SK-N-SH (cell line): ENCODE measurements at regions of chr19 and their contacts with region 1.

Region 1: GRCh38 chr19:33998739-33999345 is 173.5 kb upstream of the LSM14A start:
- DNase-seq: peak; percentile 33
- H3K4me3 ChIP-seq: no peak overlapping the region
- H3K27ac ChIP-seq: no peak overlapping the region
- H3K4me1 ChIP-seq: no peaks in the 10 kb centered on the region; a peak in 1 of 4 replicates
- H3K27me3 ChIP-seq: no peaks in the 10 kb centered on the region
- CTCF ChIP-seq: peak; percentile 63
- EP300 ChIP-seq: no peak
- RAD21 ChIP-seq: peak; percentile 49

Region 2: GRCh38 chr19:33785795-33786194 is 213.0 kb before region 1 on chr19:
- CTCF ChIA-PET with region 1: interaction called, 10 read pairs
- POLR2A ChIA-PET with region 1: no interaction called
- DNase-seq: no peak
- H3K4me3 ChIP-seq: no peak overlapping the region
- H3K27ac ChIP-seq: no peak overlapping the region
- H3K4me1 ChIP-seq: no peaks in the 10 kb centered on the region
- H3K27me3 ChIP-seq: no peaks in the 10 kb centered on the region
- CTCF ChIP-seq: no peak
- EP300 ChIP-seq: no peak
- RAD21 ChIP-seq: no peak

Region 3: DNA sequence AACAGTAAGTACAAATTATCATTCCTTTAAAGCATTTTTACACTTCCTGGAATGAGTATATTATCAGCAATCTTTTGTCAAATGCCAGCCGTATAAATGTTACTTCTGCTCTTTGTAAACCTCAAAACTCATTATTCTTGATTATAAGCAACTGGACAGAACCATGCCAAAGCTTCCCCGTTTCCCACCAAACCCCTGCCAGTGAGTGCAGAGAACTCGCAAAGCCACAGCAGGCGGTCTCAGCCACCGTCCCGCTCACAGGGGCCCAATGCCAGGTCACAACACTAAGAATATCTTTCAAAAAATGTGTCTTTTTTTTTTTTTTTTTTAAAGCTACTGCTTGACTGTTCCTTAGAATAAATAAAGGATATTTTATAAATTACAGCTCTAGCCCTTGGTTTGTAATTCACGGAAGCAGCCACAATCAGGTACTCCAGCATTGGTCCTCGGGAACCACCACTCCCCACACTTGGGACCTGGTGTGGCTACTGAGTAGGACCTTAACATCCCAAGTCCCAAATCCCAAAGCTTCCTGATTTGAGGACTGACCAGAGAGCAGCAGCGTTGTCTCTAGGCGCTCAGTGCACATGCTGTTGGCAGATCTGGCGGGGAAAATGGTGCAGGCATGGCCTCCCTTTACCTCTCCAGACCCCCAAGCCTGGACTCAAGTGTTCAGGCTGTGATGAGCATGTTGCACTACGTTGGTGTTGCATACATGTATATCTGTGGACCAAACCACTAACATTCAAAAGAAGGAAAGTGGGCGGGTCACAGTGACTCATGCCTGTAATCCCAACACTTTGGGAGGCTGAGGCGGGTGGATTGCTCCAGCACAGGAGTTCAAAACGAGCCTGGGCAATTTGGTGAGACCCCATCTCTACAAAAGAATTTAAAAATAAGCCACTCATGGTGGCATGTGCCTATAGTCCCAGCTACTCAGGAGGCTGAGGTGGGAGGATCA is 183.2 kb before region 1 on chr19:
- CTCF ChIA-PET with region 1: interaction called, 18 read pairs
- POLR2A ChIA-PET with region 1: no interaction called
- DNase-seq: peak; percentile 55
- H3K4me3 ChIP-seq: no peak overlapping the region
- H3K27ac ChIP-seq: peak overlapping the region in 1 of 2 experiments; percentile 92; a peak in 2 of 4 replicates
- H3K4me1 ChIP-seq: peaks cover 0 to 42% of the 10 kb centered on the region in 2 experiments; a peak in 2 of 4 replicates
- H3K27me3 ChIP-seq: no peaks in the 10 kb centered on the region
- CTCF ChIP-seq: no peak
- EP300 ChIP-seq: peak in 1 of 2 experiments; percentile 34; a peak in 1 of 4 replicates
- RAD21 ChIP-seq: no peak

Region 4: DNA sequence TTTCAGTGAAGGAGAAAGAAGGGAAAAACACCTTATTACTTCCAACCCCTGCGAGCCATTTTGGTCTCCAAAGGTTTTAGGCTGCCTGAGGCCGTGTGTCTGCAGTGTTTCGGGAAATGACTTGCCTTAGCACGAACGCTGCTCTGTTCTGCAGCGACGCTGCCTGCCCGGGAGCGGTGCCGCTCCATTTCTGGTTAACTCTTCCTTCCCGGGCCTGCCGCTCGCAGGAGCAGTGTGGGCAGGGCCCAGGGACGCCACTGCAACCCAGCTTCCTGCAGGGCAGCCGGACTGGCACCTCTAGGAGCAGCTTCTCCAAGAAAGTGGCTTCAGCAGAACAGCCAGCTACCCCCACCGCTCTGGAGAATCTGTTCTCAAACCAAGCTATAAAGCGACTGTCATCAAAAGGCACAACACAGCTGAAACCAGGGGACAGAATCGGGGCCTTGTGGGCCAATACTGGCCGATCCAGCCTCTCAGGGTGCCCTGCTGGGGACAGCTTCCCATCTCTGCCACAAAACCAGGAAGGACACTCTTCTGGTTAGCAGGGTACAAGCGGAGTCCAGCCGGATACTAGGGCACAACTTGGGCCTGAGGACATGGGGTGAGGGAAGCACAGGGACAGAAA is 129.9 kb before region 1 on chr19:
- CTCF ChIA-PET with region 1: interaction called, 12 read pairs
- POLR2A ChIA-PET with region 1: interaction called, 3 read pairs
- DNase-seq: peak; percentile 73
- H3K4me3 ChIP-seq: no peak overlapping the region
- H3K27ac ChIP-seq: peak overlapping the region in 1 of 2 experiments; percentile 98; a peak in 2 of 4 replicates
- H3K4me1 ChIP-seq: peaks cover 0 to 30% of the 10 kb centered on the region in 2 experiments; a peak in 2 of 4 replicates
- H3K27me3 ChIP-seq: no peaks in the 10 kb centered on the region
- CTCF ChIP-seq: no peak
- EP300 ChIP-seq: peak in 1 of 2 experiments; percentile 57; a peak in 2 of 4 replicates
- RAD21 ChIP-seq: peak; percentile 45; the same call in 1 of the 2 replicates

Region 5: DNA sequence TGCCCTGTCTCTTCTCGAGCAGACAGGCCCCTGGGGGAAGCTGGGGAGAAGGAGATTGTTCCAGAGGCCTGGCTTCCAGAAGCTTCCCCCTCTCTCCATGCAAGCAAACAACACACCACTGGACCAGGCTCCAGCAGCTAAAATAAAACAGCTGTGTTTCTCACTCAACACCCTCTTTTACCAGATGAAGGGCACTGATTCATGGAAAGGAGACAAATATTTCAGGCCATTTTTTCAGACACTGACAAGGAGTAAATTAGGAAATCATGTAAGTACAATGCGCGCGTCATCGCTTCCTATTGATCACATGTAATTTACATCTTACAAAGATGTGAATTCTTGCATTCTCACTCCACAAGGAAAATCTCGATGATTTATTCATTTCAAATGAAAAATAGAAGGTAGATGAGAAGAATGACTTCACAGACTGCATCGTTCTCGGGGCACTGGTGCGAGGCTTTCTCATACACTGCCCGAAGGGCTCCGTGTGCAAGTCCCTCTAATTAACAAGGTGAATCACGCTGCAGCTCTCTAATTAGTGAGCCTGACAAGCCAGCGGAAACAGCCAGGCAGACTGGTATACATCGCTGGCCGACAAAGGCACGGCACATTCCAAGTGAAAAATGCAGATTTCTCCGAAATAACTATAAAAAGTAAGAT is 48.6 kb before region 1 on chr19:
- CTCF ChIA-PET with region 1: interaction called, 13 read pairs
- POLR2A ChIA-PET with region 1: no interaction called
- DNase-seq: peak; percentile 48
- H3K4me3 ChIP-seq: no peak overlapping the region
- H3K27ac ChIP-seq: peak overlapping the region in 1 of 2 experiments; percentile 24; a peak in 1 of 4 replicates
- H3K4me1 ChIP-seq: peaks cover 0 to 5% of the 10 kb centered on the region in 2 experiments; a peak in 1 of 4 replicates
- H3K27me3 ChIP-seq: no peaks in the 10 kb centered on the region
- CTCF ChIP-seq: no peak
- EP300 ChIP-seq: peak in 1 of 2 experiments; percentile 35; a peak in 1 of 4 replicates
- RAD21 ChIP-seq: 0 out of 2 replicates have a peak, but pooled peaks have one; percentile 3

Region 6: GRCh38 chr19:33982706-33983105 is 16.1 kb before region 1 on chr19:
- CTCF ChIA-PET with region 1: interaction called, 24 read pairs
- POLR2A ChIA-PET with region 1: no interaction called
- DNase-seq: no peak
- H3K4me3 ChIP-seq: no peak overlapping the region
- H3K27ac ChIP-seq: no peak overlapping the region
- H3K4me1 ChIP-seq: peaks cover 0 to 12% of the 10 kb centered on the region in 2 experiments; a peak in 2 of 4 replicates
- H3K27me3 ChIP-seq: no peaks in the 10 kb centered on the region
- CTCF ChIP-seq: no peak
- EP300 ChIP-seq: no peak
- RAD21 ChIP-seq: no peak

Region 7: GRCh38 chr19:33988586-33988985 is 10.3 kb before region 1 on chr19:
- CTCF ChIA-PET with region 1: interaction called, 24 read pairs
- POLR2A ChIA-PET with region 1: no interaction called
- DNase-seq: no peak
- H3K4me3 ChIP-seq: no peak overlapping the region
- H3K27ac ChIP-seq: no peak overlapping the region
- H3K4me1 ChIP-seq: no peaks in the 10 kb centered on the region; a peak in 1 of 4 replicates
- H3K27me3 ChIP-seq: no peaks in the 10 kb centered on the region
- CTCF ChIP-seq: no peak
- EP300 ChIP-seq: no peak
- RAD21 ChIP-seq: no peak